ENCODE measurements at regions of chr16 and their contacts with region 1.

Region 1: DNA sequence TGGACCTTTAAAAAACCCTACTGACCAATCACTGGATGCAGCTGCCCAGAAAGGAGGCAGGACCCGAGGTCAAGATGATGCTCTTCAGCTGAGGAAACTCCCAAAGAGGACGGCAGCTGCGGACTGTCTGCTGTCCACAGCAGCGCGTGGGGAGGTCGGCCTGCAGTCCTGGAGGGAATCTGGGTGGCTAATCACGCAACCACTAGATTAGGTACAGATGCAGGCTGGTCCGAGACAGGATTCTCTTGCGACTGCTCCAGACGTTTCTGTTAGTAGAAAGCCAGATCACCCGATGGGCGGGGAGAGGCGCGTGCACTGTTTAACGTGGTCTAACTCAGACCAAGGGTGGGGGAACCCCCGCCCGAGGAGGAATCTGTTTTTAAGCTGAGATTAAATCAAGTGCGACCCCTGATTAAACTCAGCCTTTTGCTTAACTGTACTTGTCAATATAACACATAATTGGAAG is 8.8 kb downstream of the CTRB2 start:
- DNase-seq: no peak
- H3K4me3 ChIP-seq: no peak overlapping the region
- H3K4me3 Mint-ChIP-seq: no peak overlapping the region
- H3K27ac ChIP-seq: no peak overlapping the region
- H3K27ac Mint-ChIP-seq: no peak overlapping the region
- H3K4me1 ChIP-seq: peaks cover 14% of the 10 kb centered on the region
- H3K4me1 Mint-ChIP-seq: peaks cover 12 to 22% (median 14%) of the 10 kb centered on the region in 4 donors
- H3K27me3 ChIP-seq: no peaks in the 10 kb centered on the region
- H3K27me3 Mint-ChIP-seq: peaks cover 10 to 14% of the 10 kb centered on the region in 2 donors

Region 2: DNA sequence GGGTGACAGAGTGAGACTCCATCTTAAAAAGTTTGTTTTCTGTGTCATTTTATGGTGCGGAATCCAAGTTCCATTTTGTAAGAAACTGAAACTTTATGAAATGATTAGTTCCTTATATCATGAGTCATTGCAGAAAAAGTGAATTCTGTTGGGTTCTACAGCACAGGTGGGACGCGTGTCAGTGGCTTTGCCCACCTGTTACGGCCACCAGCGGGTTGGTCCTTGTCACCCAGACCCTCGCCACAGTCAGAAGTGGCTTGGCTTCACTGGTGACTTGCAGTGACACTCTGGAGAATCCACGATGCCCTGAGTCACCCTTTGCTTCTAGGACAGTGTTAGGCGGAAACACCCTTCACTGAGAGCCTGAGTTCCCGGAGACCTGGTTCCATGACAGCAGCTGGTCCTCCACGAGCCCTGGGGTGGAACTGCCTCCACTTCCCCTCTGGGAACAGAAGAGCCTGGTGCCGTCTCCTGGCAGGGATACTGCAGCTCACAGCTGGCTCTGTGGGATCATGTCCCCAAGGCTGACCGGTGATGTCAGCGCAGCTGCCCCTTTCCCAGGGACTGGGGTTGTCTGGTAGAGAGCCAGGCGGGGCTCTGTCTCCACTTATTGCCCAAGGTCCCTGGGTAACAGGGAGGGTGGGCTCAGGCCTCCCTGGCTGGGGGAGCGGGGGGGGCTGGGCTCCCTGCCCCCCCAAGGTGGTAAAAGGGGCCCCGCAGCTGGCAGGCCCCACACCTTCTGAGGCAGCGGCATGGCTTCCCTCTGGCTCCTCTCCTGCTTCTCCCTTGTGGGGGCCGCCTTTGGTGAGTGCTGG is 20.3 kb after region 1 on chr16 and contains the start of gene CTRB1:
- CTCF ChIA-PET with region 1: interaction called, 56 read pairs
- POLR2A ChIA-PET with region 1: no interaction called
- intact Hi-C with region 1: loop called (anchors 2 kb)
- DNase-seq: no peak
- H3K4me3 ChIP-seq: peak within 1 kb of the TSS in 1 of 2 donors; percentile 10
- H3K4me3 Mint-ChIP-seq: peak within 1 kb of the TSS; percentile 74 to 95 (median 90)
- H3K27ac ChIP-seq: peak within 1 kb of the TSS; percentile 41
- H3K27ac Mint-ChIP-seq: peak within 1 kb of the TSS; percentile 16 to 91 (median 90)
- H3K4me1 ChIP-seq: peaks cover 7% of the 10 kb centered on the region
- H3K4me1 Mint-ChIP-seq: peaks cover 6 to 16% (median 10%) of the 10 kb centered on the region in 4 donors
- H3K27me3 ChIP-seq: no peaks in the 10 kb centered on the region
- H3K27me3 Mint-ChIP-seq: no peaks in the 10 kb centered on the region
- total RNA-seq, gene CTRB1: not detected

Region 3: DNA sequence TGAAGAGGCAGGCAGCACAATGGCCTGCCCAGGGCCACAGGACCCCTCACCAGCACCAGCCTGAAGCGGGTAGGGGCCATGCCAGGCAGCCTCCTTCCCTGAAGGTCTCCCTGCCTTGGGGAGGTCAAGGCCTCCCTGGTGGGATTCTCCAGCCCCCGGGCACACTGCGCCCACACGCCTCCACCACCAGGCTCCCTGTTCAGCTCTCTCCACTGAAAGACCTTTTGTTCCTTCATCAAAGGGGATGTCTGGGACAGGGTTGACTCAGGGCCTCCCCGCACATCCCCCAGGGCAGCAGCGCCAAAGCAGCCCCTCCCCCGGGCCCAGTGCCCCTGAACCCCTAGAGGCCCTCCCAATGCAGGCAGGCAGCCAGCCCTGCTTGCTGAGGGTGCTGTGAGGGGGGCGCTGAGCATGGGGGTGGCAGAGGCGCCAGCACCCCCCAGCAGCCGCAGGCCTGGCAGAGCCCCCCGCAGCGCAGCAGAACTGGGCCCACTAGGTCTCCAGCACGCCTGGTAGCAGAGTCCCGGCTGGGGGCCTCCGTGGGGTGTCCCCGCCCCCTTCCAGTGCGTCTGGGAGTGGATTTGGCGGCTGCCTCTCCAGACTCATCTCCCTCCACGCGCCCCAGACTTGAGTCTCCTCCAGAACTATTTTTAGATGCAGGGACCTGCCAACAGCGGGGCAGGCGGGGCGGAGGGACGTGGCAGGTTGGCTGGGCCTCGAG is 40.1 kb after region 1 on chr16:
- CTCF ChIA-PET with region 1: interaction called, 53 read pairs
- POLR2A ChIA-PET with region 1: no interaction called
- intact Hi-C with region 1: loop called (anchors 1 kb)
- DNase-seq: no peak
- H3K4me3 ChIP-seq: no peak overlapping the region
- H3K4me3 Mint-ChIP-seq: no peak overlapping the region
- H3K27ac ChIP-seq: no peak overlapping the region
- H3K27ac Mint-ChIP-seq: no peak overlapping the region
- H3K4me1 ChIP-seq: peaks cover 6% of the 10 kb centered on the region
- H3K4me1 Mint-ChIP-seq: peaks cover 0 to 5% (median 2%) of the 10 kb centered on the region in 4 donors
- H3K27me3 ChIP-seq: no peaks in the 10 kb centered on the region
- H3K27me3 Mint-ChIP-seq: no peaks in the 10 kb centered on the region

Region 4: GRCh38 chr16:75392911-75393310 is 194.7 kb after region 1 on chr16:
- CTCF ChIA-PET with region 1: interaction called, 156 read pairs
- POLR2A ChIA-PET with region 1: no interaction called
- intact Hi-C with region 1: no loop called
- DNase-seq: no peak
- H3K4me3 ChIP-seq: no peak overlapping the region
- H3K4me3 Mint-ChIP-seq: no peak overlapping the region
- H3K27ac ChIP-seq: no peak overlapping the region
- H3K27ac Mint-ChIP-seq: peak overlapping the region in 1 of 7 donors; percentile 35
- H3K4me1 ChIP-seq: no peaks in the 10 kb centered on the region
- H3K4me1 Mint-ChIP-seq: peaks cover 5 to 20% (median 13%) of the 10 kb centered on the region in 4 donors
- H3K27me3 ChIP-seq: no peaks in the 10 kb centered on the region
- H3K27me3 Mint-ChIP-seq: no peaks in the 10 kb centered on the region

Region 5: GRCh38 chr16:75764154-75764768 is 566.1 kb after region 1 on chr16:
- CTCF ChIA-PET with region 1: interaction called, 18 read pairs
- POLR2A ChIA-PET with region 1: interaction called, 3 read pairs
- intact Hi-C with region 1: loop called (anchors 1 kb)
- DNase-seq: peak; percentile 57 to 69 (median 67)
- H3K4me3 ChIP-seq: no peak overlapping the region
- H3K4me3 Mint-ChIP-seq: no peak overlapping the region
- H3K27ac ChIP-seq: no peak overlapping the region
- H3K27ac Mint-ChIP-seq: peak overlapping the region in 1 of 7 donors; percentile 3
- H3K4me1 ChIP-seq: no peaks in the 10 kb centered on the region
- H3K4me1 Mint-ChIP-seq: peaks cover 4 to 8% (median 6%) of the 10 kb centered on the region in 4 donors
- H3K27me3 ChIP-seq: no peaks in the 10 kb centered on the region
- H3K27me3 Mint-ChIP-seq: peaks cover 0 to 2% of the 10 kb centered on the region in 2 donors